CD8-positive, alpha-beta T cell (primary cell): ENCODE measurements at regions of chr7 and their contacts with region 1.

Region 1: DNA sequence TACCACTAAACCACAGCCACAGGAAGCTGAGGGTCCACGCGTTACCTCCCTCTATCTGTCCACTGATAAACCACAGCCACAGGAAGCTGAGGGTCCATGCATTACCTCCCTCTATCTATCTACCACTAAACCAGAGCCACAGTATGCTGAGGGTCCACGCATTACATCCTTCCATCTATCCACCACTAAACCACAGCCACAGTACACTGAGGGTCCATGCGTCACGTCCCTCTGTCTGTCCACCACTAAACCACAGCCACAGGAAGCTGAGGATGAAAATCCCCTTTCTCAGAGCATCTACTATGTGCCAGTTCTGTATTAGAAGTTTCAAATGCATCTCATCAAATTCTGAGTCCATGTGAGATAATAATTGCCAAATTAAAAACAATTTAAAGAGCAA is 589.3 kb downstream of the DNAJB6 start:
- DNase-seq: peak in 3 of 9 experiments; percentile 38 to 69 (median 57)
- ATAC-seq: peak; percentile 43
- H3K4me3 ChIP-seq: no peak overlapping the region
- H3K4me3 Mint-ChIP-seq: peak overlapping the region; percentile 0
- H3K27ac ChIP-seq: peak overlapping the region in 1 of 2 experiments; percentile 70
- H3K27ac Mint-ChIP-seq: peak overlapping the region; percentile 97
- H3K4me1 ChIP-seq: peaks cover 45% of the 10 kb centered on the region
- H3K4me1 Mint-ChIP-seq: peaks cover 48% of the 10 kb centered on the region
- H3K27me3 ChIP-seq: no peaks in the 10 kb centered on the region
- H3K27me3 Mint-ChIP-seq: no peaks in the 10 kb centered on the region
- CTCF ChIP-seq: no peak

Region 2: GRCh38 chr7:157138424-157139110 is 787.5 kb before region 1 on chr7 and contains the start of gene UBE3C:
- CTCF ChIA-PET with region 1: no interaction called
- POLR2A ChIA-PET with region 1: no interaction called
- intact Hi-C with region 1: loop called in 1 of 2 experiments (anchors 5 kb)
- DNase-seq: peak; percentile 81 to 97 (median 89)
- ATAC-seq: peak; percentile 85
- H3K4me3 ChIP-seq: peak within 1 kb of the TSS; percentile 57 to 59
- H3K4me3 Mint-ChIP-seq: peak within 1 kb of the TSS; percentile 84
- H3K27ac ChIP-seq: peak within 1 kb of the TSS; percentile 76 to 88
- H3K27ac Mint-ChIP-seq: peak within 1 kb of the TSS; percentile 94
- H3K4me1 ChIP-seq: peaks cover 38% of the 10 kb centered on the region
- H3K4me1 Mint-ChIP-seq: peaks cover 41% of the 10 kb centered on the region
- H3K27me3 ChIP-seq: no peaks in the 10 kb centered on the region
- H3K27me3 Mint-ChIP-seq: no peaks in the 10 kb centered on the region
- CTCF ChIP-seq: no peak
- total RNA-seq, gene UBE3C: 25.3 to 28.8 TPM

Region 3: DNA sequence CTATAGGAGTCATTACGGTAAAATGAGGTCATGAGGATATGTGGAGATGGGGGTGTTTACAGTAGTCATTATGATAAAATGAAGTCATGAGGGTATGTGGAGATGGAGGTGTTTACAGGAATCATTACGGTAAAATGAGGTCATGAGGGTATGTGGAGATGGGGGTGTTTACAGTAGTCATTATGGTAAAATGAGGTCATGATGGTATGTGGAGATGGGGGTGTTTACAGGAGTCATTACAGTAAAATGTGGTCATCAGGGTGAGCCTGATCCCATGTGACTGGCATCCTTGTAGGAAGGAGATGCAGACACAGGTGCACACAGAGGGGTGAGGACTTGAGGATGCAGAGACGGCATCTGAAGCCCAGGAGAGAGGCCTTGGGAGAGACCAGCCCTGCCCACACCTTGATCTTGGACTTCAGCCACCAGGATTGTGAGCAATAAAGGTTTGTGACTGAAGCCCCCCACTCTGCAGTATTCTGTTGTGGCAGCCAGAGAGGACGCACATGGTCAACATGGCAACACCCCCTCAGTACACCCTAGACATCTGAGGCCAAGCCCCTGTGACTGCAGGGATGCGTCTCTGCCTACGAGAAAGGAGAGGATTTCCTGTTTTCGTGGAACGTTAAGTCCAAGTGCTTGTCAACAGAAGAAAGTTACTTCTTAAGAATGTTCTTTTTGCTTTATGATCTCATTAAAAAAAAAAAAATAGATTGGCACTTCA is 44.9 kb before region 1 on chr7:
- CTCF ChIA-PET with region 1: no interaction called
- POLR2A ChIA-PET with region 1: no interaction called
- intact Hi-C with region 1: loop called in 1 of 2 experiments (anchors 5 kb)
- DNase-seq: peak in 2 of 9 experiments; percentile 45 to 66
- ATAC-seq: peak; percentile 79
- H3K4me3 ChIP-seq: no peak overlapping the region
- H3K4me3 Mint-ChIP-seq: no peak overlapping the region
- H3K27ac ChIP-seq: peak overlapping the region in 1 of 2 experiments; percentile 59
- H3K27ac Mint-ChIP-seq: no peak overlapping the region
- H3K4me1 ChIP-seq: peaks cover 17% of the 10 kb centered on the region
- H3K4me1 Mint-ChIP-seq: peaks cover 3% of the 10 kb centered on the region
- H3K27me3 ChIP-seq: no peaks in the 10 kb centered on the region
- H3K27me3 Mint-ChIP-seq: no peaks in the 10 kb centered on the region
- CTCF ChIP-seq: no peak